ENCODE measurements at regions of chr11 and their contacts with region 1.

Region 1: GRCh38 chr11:112174789-112175598 is at the start of gene BCO2:
- DNase-seq: no peak
- ATAC-seq: peak; percentile 76
- H3K4me3 ChIP-seq: no peak within 1 kb of the TSS
- H3K27ac ChIP-seq: no peak within 1 kb of the TSS
- H3K4me1 ChIP-seq: peaks cover 8% of the 10 kb centered on the region
- H3K27me3 ChIP-seq: no peaks in the 10 kb centered on the region
- CTCF ChIP-seq: peak; percentile 58 to 88 (median 64); a peak in 5 of 6 replicates
- EP300 ChIP-seq: no peak
- POLR2A ChIP-seq: no peak
- RAD21 ChIP-seq: peak; percentile 58
- polyA plus RNA-seq, gene BCO2: 0.29 to 0.42 TPM

Region 2: GRCh38 chr11:111938687-111939160 is 236.3 kb before region 1 on chr11:
- CTCF ChIA-PET with region 1: interaction called, 3 read pairs
- POLR2A ChIA-PET with region 1: no interaction called
- RAD21 ChIA-PET with region 1: no interaction called
- SMC1A ChIA-PET with region 1: interaction called, 3 read pairs
- in situ Hi-C with region 1: no loop called
- intact Hi-C with region 1: loop called (anchors 10 kb)
- DNase-seq: peak; percentile 71
- ATAC-seq: peak; percentile 93
- H3K4me3 ChIP-seq: peak overlapping the region; percentile 47
- H3K27ac ChIP-seq: peak overlapping the region; percentile 35; the same call in 1 of the 2 replicates
- H3K4me1 ChIP-seq: peaks cover 22% of the 10 kb centered on the region
- H3K27me3 ChIP-seq: 0 out of 4 replicates have a peak, but pooled peaks cover 0 to 1% of the 10 kb centered on the region in 2 experiments
- CTCF ChIP-seq: no peak
- EP300 ChIP-seq: peak in 1 of 2 experiments; percentile 65; a peak in 1 of 4 replicates
- POLR2A ChIP-seq: no peak
- RAD21 ChIP-seq: no peak

Region 3: GRCh38 chr11:112016765-112017356 is 158.1 kb before region 1 on chr11:
- CTCF ChIA-PET with region 1: no interaction called
- POLR2A ChIA-PET with region 1: no interaction called
- RAD21 ChIA-PET with region 1: no interaction called
- SMC1A ChIA-PET with region 1: no interaction called
- in situ Hi-C with region 1: no loop called
- intact Hi-C with region 1: loop called (anchors 10 kb)
- DNase-seq: no peak
- ATAC-seq: peak; percentile 70
- H3K4me3 ChIP-seq: peak overlapping the region; percentile 64
- H3K27ac ChIP-seq: peak overlapping the region; percentile 51
- H3K4me1 ChIP-seq: peaks cover 12% of the 10 kb centered on the region
- H3K27me3 ChIP-seq: no peaks in the 10 kb centered on the region
- CTCF ChIP-seq: no peak
- EP300 ChIP-seq: no peak
- POLR2A ChIP-seq: no peak
- RAD21 ChIP-seq: no peak

Region 4: DNA sequence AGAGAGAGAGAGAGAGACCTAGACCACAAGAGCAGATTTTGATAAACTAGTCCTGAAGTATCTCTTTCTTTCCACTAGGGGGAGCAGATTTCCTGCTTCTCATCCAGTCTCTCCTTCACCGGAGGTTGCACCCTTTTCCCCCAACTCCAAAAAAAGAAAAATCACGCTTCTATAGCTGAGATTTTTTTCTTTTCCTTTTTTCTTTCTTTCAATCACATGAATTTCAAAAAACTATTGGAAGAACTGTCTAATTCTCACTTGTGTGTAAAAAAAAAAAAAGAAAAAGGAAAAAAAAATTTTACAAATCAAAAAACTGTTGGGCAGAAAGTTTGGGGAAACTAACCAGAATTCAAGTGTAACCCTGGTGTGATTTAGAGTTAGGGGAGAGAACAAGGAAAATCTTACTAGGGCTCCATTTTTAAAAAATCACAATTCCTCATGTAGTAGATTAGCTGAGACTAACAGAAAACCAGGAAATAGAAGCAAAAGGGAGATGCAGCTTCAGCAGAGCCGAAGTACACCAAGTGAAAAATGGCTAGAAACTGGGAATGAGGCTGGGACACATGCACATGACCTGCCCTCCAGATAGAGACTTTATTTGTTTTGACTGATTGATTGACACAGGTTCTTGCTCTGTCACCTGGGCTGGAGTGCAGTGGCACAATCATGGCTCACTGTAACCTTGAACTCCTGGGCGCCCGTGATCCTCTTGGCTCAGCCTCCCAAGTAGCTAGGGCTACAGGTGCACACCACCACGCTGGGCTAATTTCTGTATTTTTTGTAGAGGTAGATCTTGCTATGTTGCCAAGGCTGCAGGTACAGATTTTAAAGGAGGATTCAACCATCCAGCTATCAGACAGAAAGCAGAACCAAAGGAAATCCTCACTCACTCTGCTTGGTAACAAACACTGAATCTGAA is 61.2 kb before region 1 on chr11:
- CTCF ChIA-PET with region 1: interaction called, 24 read pairs
- POLR2A ChIA-PET with region 1: no interaction called
- RAD21 ChIA-PET with region 1: interaction called, 6 read pairs
- SMC1A ChIA-PET with region 1: interaction called, 4 read pairs
- in situ Hi-C with region 1: no loop called
- intact Hi-C with region 1: loop called (anchors 5 kb)
- DNase-seq: no peak
- ATAC-seq: peak; percentile 74
- H3K4me3 ChIP-seq: no peak overlapping the region
- H3K27ac ChIP-seq: no peak overlapping the region
- H3K4me1 ChIP-seq: no peaks in the 10 kb centered on the region; the same call in 1 of the 2 replicates
- H3K27me3 ChIP-seq: no peaks in the 10 kb centered on the region
- CTCF ChIP-seq: peak; percentile 53 to 70 (median 59)
- EP300 ChIP-seq: no peak
- POLR2A ChIP-seq: no peak
- RAD21 ChIP-seq: peak; percentile 69

Region 5: DNA sequence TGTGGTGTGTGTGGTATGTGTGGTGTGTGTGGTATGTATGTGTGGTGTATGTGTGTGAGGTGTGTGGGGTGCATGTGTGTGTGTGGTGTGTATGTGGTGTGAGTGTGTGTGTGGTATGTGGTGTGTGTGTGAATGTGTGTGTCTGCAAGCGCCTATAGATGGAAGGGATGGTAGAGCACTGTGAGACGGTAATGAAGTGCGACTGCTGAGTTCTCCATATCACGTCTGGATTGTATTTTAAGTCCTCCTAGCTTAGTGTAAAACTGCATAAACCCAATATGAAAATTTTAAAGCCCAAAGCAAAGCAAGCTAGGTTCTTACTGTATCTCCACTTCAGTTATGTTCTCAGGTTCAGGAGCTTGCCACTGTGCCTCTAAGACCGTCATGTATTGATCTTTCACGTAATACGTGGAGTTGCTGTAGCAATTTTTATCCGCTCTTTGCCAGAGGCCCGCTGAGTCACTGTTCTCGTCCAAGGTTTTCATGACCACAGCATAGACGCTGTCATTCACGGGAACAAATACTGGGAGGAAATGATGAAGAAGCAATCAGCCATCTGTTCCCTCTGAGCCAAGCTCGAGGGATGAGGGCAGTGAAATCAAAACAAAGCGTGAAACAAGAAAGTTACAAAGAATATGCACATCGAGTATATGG is 80.2 kb after region 1 on chr11:
- CTCF ChIA-PET with region 1: no interaction called
- POLR2A ChIA-PET with region 1: no interaction called
- RAD21 ChIA-PET with region 1: no interaction called
- SMC1A ChIA-PET with region 1: no interaction called
- in situ Hi-C with region 1: no loop called
- intact Hi-C with region 1: no loop called
- DNase-seq: no peak
- ATAC-seq: no peak
- H3K4me3 ChIP-seq: no peak overlapping the region
- H3K27ac ChIP-seq: no peak overlapping the region
- H3K4me1 ChIP-seq: no peaks in the 10 kb centered on the region
- H3K27me3 ChIP-seq: no peaks in the 10 kb centered on the region
- CTCF ChIP-seq: no peak
- EP300 ChIP-seq: no peak
- POLR2A ChIP-seq: no peak
- RAD21 ChIP-seq: no peak

Region 6: GRCh38 chr11:112613051-112613972 is 438.3 kb after region 1 on chr11:
- CTCF ChIA-PET with region 1: no interaction called
- POLR2A ChIA-PET with region 1: no interaction called
- RAD21 ChIA-PET with region 1: no interaction called
- SMC1A ChIA-PET with region 1: no interaction called
- in situ Hi-C with region 1: no loop called
- intact Hi-C with region 1: no loop called
- DNase-seq: no peak
- ATAC-seq: no peak
- H3K4me3 ChIP-seq: no peak overlapping the region
- H3K27ac ChIP-seq: no peak overlapping the region
- H3K4me1 ChIP-seq: no peaks in the 10 kb centered on the region; the same call in 1 of the 2 replicates
- H3K27me3 ChIP-seq: no peaks in the 10 kb centered on the region
- CTCF ChIP-seq: no peak
- EP300 ChIP-seq: no peak
- POLR2A ChIP-seq: no peak
- RAD21 ChIP-seq: no peak